ENCODE measurements at regions of chr5 and their contacts with region 1.

Region 1: GRCh38 chr5:141878711-141879425 is 658 bp upstream of the PCDH1 start:
- DNase-seq: peak; percentile 83 to 94 (median 84)
- H3K4me3 ChIP-seq: peak overlapping the region; percentile 75
- H3K4me3 Mint-ChIP-seq: peak overlapping the region; percentile 71 to 89 (median 83)
- H3K27ac ChIP-seq: no peak overlapping the region
- H3K27ac Mint-ChIP-seq: peak overlapping the region in 5 of 8 donors; percentile 13 to 87 (median 47)
- H3K4me1 ChIP-seq: peaks cover 27% of the 10 kb centered on the region
- H3K4me1 Mint-ChIP-seq: peaks cover 22 to 39% (median 31%) of the 10 kb centered on the region in 3 donors
- H3K27me3 ChIP-seq: peaks cover 78% of the 10 kb centered on the region
- H3K27me3 Mint-ChIP-seq: peaks cover 74 to 78% of the 10 kb centered on the region in 2 donors

Region 2: DNA sequence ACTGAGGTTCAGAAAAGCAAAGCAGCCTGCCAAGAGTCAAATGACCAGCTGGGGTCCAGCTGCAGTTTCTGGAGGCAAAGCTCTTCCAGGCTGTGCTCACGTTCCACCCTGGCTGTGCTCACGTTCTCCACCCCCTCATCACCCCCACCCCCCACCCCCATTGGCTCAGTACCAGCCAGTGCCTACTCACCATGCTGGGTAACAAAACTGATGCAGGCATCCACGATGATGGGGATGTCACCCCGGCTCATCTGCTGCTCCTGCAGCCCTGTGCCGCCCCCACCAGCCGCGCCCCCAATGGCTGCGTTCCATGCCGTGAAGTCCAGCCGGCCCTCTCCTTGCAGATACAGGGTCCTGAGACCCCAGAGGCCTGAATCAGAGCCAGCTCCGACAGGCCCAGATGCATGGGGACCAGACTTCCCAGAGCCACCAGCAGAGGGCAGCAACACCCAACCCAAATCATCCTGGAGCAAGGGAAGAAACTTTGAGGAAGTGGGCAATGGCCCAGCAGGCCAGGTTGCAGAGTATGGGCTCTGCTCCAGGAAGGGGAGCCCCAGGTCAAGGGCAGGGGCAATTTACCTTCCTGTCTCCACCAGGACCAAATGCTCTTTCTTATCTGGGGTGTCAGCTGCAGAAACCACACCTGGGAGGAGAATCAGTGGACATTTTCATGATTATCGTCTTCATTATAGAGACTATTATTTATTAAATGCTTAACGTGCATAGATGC is 214.0 kb before region 1 on chr5:
- CTCF ChIA-PET with region 1: interaction called, 54 read pairs
- POLR2A ChIA-PET with region 1: no interaction called
- DNase-seq: peak; percentile 49 to 79 (median 62)
- H3K4me3 ChIP-seq: no peak overlapping the region
- H3K4me3 Mint-ChIP-seq: no peak overlapping the region
- H3K27ac ChIP-seq: no peak overlapping the region
- H3K27ac Mint-ChIP-seq: no peak overlapping the region
- H3K4me1 ChIP-seq: no peaks in the 10 kb centered on the region
- H3K4me1 Mint-ChIP-seq: peaks cover 4 to 5% (median 4%) of the 10 kb centered on the region in 3 donors
- H3K27me3 ChIP-seq: no peaks in the 10 kb centered on the region
- H3K27me3 Mint-ChIP-seq: peaks cover 0 to 2% of the 10 kb centered on the region in 2 donors

Region 3: DNA sequence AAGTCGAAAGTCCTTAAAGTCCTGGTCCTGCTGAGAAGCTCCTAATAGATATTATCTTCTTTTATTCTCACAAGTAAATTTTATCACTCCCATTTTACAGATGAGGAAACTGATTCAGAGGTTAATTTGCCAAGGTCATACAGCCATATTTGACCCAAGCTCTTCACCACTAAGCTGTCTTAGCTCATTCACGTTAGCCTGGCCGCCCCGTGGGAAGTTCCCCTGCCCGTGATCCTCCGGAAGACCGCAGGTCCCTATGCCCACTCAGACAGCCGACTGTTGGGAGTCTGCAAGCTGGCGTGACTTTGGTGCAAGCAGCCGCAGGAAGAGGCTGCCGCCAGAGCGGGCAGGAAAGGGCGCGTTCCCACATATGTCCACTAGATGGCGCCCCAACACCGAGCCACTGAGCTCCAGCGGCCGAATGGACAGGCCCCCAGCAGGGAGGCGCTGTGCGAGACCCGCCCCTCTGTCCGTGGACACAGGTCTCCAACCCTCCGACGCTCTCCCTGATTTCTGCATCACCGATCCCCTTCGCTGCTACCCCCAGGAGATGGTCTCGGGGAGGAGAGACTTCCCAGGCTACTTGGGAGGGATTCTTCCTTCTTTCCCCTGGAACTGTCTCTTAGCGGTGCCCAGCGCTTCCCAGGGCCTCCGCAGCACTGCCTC is 186.9 kb before region 1 on chr5:
- CTCF ChIA-PET with region 1: interaction called, 184 read pairs
- POLR2A ChIA-PET with region 1: interaction called, 21 read pairs
- DNase-seq: peak; percentile 74 to 88 (median 79)
- H3K4me3 ChIP-seq: peak overlapping the region; percentile 56
- H3K4me3 Mint-ChIP-seq: peak overlapping the region; percentile 70 to 85 (median 78)
- H3K27ac ChIP-seq: peak overlapping the region; percentile 4
- H3K27ac Mint-ChIP-seq: peak overlapping the region in 6 of 8 donors; percentile 17 to 92 (median 75)
- H3K4me1 ChIP-seq: peaks cover 15% of the 10 kb centered on the region
- H3K4me1 Mint-ChIP-seq: peaks cover 20 to 24% (median 20%) of the 10 kb centered on the region in 3 donors
- H3K27me3 ChIP-seq: no peaks in the 10 kb centered on the region
- H3K27me3 Mint-ChIP-seq: peaks cover 8 to 13% of the 10 kb centered on the region in 2 donors

Region 4: DNA sequence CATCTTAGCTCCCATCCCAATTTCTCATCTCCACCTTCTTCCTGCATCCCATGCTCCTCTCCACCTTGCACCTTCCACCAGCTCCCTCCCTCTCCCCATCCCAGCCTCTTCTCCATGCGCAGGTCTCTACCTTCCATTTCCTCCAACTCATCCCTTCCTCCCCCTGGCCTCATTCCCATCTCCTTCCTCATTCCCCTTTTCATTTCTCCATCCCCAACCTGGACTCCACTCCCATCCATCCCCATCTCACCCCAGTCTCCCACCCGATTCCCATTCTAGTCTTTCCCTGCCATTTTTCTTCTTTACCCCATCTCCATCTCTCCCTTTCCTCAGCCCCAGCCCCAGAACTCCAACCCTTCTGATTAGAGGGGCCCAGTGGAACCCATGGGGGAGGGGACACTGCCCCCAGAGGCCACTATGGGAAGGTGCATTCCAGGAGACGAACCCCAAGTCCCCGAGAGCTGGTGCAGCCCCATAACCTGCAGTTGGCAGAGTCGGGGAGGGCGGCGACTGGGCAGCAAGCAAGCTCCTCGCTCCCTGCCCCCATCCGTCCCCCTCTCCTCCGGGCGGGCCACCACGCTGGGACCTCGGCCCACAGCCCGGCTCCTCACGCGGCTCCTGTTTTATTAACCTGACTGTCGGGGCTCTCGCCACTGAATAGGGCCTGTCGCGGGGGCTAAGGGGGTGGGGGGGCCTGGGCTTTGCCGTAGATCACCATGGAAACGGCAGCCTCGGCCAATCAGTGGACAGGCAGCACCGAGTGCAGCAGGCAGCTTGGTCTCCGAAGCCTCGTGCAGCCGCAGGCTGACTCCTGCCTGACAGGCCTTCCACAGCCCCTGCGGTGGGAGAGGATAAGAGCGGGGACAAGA is 67.3 kb before region 1 on chr5:
- CTCF ChIA-PET with region 1: interaction called, 30 read pairs
- POLR2A ChIA-PET with region 1: no interaction called
- DNase-seq: peak in 3 of 5 donors; percentile 2 to 12 (median 6)
- H3K4me3 ChIP-seq: no peak overlapping the region
- H3K4me3 Mint-ChIP-seq: no peak overlapping the region
- H3K27ac ChIP-seq: no peak overlapping the region
- H3K27ac Mint-ChIP-seq: no peak overlapping the region
- H3K4me1 ChIP-seq: no peaks in the 10 kb centered on the region
- H3K4me1 Mint-ChIP-seq: no peaks in the 10 kb centered on the region
- H3K27me3 ChIP-seq: peaks cover 17% of the 10 kb centered on the region
- H3K27me3 Mint-ChIP-seq: peaks cover 25 to 76% of the 10 kb centered on the region in 2 donors

Region 5: GRCh38 chr5:141849375-141850243 is 29.3 kb before region 1 on chr5:
- CTCF ChIA-PET with region 1: interaction called, 10 read pairs
- POLR2A ChIA-PET with region 1: interaction called, 3 read pairs
- DNase-seq: peak; percentile 52 to 76 (median 60)
- H3K4me3 ChIP-seq: peak overlapping the region; percentile 91
- H3K4me3 Mint-ChIP-seq: peak overlapping the region; percentile 86 to 96 (median 89)
- H3K27ac ChIP-seq: peak overlapping the region; percentile 82
- H3K27ac Mint-ChIP-seq: peak overlapping the region; percentile 15 to 88 (median 81)
- H3K4me1 ChIP-seq: peaks cover 7% of the 10 kb centered on the region
- H3K4me1 Mint-ChIP-seq: peaks cover 7 to 10% (median 9%) of the 10 kb centered on the region in 3 donors
- H3K27me3 ChIP-seq: no peaks in the 10 kb centered on the region
- H3K27me3 Mint-ChIP-seq: peaks cover 4 to 13% of the 10 kb centered on the region in 2 donors

Region 6: GRCh38 chr5:141889282-141889871 is 10.5 kb after region 1 on chr5:
- CTCF ChIA-PET with region 1: interaction called, 11 read pairs
- POLR2A ChIA-PET with region 1: no interaction called
- DNase-seq: no peak
- H3K4me3 ChIP-seq: no peak overlapping the region
- H3K4me3 Mint-ChIP-seq: no peak overlapping the region
- H3K27ac ChIP-seq: no peak overlapping the region
- H3K27ac Mint-ChIP-seq: no peak overlapping the region
- H3K4me1 ChIP-seq: no peaks in the 10 kb centered on the region
- H3K4me1 Mint-ChIP-seq: no peaks in the 10 kb centered on the region
- H3K27me3 ChIP-seq: peaks cover 13% of the 10 kb centered on the region
- H3K27me3 Mint-ChIP-seq: peaks cover 27 to 45% of the 10 kb centered on the region in 2 donors

Region 7: GRCh38 chr5:141960449-141961202 is 81.8 kb after region 1 on chr5:
- CTCF ChIA-PET with region 1: interaction called, 63 read pairs
- POLR2A ChIA-PET with region 1: interaction called, 4 read pairs
- DNase-seq: peak; percentile 82 to 91 (median 84)
- H3K4me3 ChIP-seq: peak overlapping the region; percentile 28
- H3K4me3 Mint-ChIP-seq: peak overlapping the region; percentile 6 to 76 (median 52)
- H3K27ac ChIP-seq: no peak overlapping the region
- H3K27ac Mint-ChIP-seq: peak overlapping the region; percentile 8 to 92 (median 84)
- H3K4me1 ChIP-seq: peaks cover 39% of the 10 kb centered on the region
- H3K4me1 Mint-ChIP-seq: peaks cover 42 to 50% (median 48%) of the 10 kb centered on the region in 3 donors
- H3K27me3 ChIP-seq: no peaks in the 10 kb centered on the region
- H3K27me3 Mint-ChIP-seq: no peaks in the 10 kb centered on the region

Region 8: DNA sequence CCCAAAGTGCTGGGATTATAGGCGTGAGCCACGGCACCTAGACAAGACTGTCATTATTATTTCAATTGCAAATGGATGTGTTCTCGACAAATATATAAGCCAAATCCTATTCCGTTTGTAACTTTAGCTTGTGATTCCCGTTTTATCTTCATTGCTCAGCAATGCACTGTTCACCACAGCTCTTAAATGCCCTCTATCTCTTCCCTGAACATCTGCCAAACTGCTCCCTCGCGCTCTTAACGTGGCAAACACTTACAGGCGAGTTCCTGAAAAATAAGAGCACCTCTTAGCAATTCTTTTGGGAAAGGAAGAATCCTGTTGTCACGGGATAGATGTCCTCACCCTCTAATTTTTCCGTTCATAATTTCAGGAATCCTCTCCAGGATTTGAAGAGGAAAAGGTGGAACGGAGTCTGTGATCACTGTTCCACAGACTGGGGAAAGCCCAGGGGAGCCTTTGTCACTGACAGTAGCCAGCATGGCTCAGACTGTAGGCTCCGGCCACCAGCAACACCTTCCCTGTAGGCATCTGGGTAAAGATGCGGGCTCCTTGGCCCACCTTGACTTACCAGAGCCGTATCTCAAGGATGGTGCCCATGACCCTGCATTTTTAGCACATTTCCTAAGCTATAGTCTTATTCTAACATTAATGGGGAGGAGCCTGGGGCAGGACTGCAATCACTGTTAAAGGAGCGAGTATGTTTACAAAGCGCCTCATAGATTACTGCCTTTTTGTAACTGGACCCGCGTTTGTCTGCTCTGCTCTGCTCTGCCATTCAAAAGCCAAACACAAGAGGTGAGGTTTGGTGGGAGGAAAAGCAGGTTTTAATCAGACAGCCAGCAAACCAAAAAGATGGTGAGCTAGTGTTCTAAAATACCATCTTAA is 154.1 kb after region 1 on chr5:
- CTCF ChIA-PET with region 1: no interaction called
- POLR2A ChIA-PET with region 1: no interaction called
- DNase-seq: no peak
- H3K4me3 ChIP-seq: no peak overlapping the region
- H3K4me3 Mint-ChIP-seq: no peak overlapping the region
- H3K27ac ChIP-seq: no peak overlapping the region
- H3K27ac Mint-ChIP-seq: peak overlapping the region in 1 of 8 donors; percentile 70
- H3K4me1 ChIP-seq: peaks cover 10% of the 10 kb centered on the region
- H3K4me1 Mint-ChIP-seq: peaks cover 16 to 21% (median 18%) of the 10 kb centered on the region in 3 donors
- H3K27me3 ChIP-seq: no peaks in the 10 kb centered on the region
- H3K27me3 Mint-ChIP-seq: peaks cover 0 to 3% of the 10 kb centered on the region in 2 donors

Region 9: DNA sequence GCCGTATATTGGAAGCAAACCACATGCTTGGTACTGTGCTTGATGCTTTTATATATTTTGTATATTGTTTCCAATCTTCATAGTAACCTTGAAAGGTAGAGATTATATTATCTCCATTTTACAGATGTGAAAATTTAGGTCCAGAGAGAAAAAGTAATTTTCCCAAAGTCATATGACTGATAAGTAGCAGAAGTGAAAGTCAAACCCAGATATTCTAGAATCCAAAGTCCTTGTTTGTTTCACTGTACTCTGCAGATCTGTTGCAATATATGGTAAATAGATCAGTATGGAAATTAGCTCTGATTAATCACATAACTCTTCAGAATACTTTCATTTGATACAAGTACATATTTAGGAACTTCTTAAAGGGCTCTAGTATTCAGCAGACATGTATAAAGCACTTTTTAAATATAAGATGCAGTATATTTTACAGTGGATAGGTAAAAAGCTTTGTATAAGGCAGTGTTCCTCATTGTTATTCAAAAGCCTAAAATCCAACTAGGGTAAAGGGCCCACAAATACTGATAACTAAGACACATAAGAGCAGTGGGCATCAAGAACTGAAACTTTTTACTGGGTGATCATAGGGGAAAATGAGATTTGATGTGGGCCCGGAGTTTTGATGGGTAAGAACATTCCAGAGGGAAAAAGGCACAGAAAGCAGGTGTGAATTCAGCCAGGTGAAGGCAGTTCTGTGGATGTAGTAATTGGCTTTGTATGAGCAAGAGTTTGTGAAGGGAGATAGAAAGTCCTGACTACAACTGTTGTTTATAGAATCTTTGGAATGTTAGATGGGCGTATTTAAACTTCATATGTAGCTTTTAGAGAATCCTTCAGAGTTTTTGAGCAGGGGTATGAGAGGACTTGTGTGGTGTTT is 254.7 kb after region 1 on chr5:
- CTCF ChIA-PET with region 1: no interaction called
- POLR2A ChIA-PET with region 1: no interaction called
- DNase-seq: no peak
- H3K4me3 ChIP-seq: no peak overlapping the region
- H3K4me3 Mint-ChIP-seq: no peak overlapping the region
- H3K27ac ChIP-seq: no peak overlapping the region
- H3K27ac Mint-ChIP-seq: no peak overlapping the region
- H3K4me1 ChIP-seq: peaks cover 26% of the 10 kb centered on the region
- H3K4me1 Mint-ChIP-seq: peaks cover 31 to 45% (median 31%) of the 10 kb centered on the region in 3 donors
- H3K27me3 ChIP-seq: no peaks in the 10 kb centered on the region
- H3K27me3 Mint-ChIP-seq: no peaks in the 10 kb centered on the region